Activated CD4-positive, alpha-beta T cell treated with anti-CD3 and anti-CD28 coated beads, Interleukin-2, amount 10 ng/mL, durations not matched to agents 24 days and 14 days (primary cell): ENCODE measurements at regions of chr7 and their contacts with region 1.

Region 1: GRCh38 chr7:151110941-151111645 is 24.8 kb downstream of the AGAP3 start:
- DNase-seq: peak; percentile 93
- H3K4me3 Mint-ChIP-seq: no peak overlapping the region
- H3K27ac Mint-ChIP-seq: no peak overlapping the region
- H3K4me1 Mint-ChIP-seq: peaks cover 3% of the 10 kb centered on the region
- H3K27me3 Mint-ChIP-seq: peaks cover 16% of the 10 kb centered on the region

Region 2: DNA sequence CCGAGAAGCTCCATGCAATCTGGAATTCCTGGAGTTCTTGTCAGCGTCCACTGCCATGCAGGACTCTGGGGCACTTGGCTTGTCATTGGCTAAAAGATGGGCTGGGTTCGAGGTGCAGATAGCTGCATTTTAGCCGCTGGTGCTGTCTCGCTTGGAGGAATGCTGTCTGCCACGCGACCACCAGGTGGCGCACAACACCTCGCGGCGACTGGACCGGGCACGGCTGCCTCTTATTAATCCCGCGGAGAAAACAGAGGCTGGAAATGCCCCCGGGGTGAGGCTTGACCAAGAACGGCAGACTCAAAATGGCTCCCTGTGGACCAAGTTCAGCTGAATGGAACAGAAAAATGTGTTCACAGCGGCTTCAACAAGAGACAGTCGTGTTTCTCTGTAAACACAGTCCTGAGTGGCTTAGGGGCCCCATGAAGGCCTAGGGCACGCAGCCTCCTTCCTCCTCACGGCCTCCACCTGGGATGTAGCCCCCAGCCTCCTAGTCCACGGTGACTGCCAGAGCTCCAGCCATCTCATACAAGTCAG is 212.6 kb before region 1 on chr7:
- intact Hi-C with region 1: loop called (anchors 5 kb)
- DNase-seq: peak; percentile 93
- H3K4me3 Mint-ChIP-seq: no peak overlapping the region
- H3K27ac Mint-ChIP-seq: no peak overlapping the region
- H3K4me1 Mint-ChIP-seq: peaks cover 4% of the 10 kb centered on the region
- H3K27me3 Mint-ChIP-seq: peaks cover 56% of the 10 kb centered on the region

Region 3: DNA sequence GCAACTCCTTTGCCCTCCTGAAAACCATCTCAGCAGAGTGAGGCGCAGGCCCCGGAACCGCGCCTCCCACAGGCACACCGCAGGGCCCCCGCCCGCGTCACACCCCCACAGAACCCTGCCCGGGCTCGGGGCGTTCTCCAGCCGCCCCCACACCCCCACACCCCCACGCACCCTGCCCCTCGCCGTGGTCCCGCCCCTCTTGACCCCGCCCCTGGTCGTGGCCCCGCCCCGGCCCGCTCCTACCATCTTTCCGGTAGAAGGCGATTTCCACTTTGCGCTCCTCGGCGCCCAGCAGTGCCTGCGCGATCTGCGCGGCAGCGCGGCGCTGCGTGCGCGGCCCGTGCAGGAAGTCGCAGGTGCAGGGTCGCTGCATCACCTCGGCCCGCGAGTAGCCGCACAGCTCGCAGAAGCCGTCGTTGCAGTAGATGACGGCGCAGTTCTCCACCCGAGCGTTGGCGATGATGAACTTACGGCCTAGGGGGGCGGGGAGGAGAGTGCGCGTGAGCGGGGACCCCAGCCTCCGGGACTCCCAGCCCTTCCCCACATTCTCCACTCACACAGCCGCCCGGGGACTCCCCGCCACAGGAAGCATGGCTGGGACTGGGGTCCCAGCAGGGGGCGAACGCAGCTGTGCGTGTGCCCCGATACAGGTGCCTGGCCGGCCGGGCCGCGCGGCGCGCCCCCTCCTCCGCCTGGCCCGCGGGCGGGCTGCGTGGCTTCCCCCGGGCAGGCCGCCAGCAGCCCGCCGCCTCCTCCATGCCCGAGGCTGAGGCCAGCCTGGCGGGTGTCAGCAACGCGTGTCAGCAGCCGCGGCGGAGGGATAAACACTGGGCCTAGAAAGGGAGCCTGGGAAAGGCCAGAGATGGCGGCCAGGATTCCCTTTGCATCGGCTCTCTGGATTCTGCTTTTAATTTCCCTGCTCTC is 136.4 kb before region 1 on chr7:
- intact Hi-C with region 1: loop called (anchors 10 kb)
- DNase-seq: peak; percentile 93
- H3K4me3 Mint-ChIP-seq: peak overlapping the region; percentile 85
- H3K27ac Mint-ChIP-seq: peak overlapping the region; percentile 63
- H3K4me1 Mint-ChIP-seq: peaks cover 24% of the 10 kb centered on the region
- H3K27me3 Mint-ChIP-seq: peaks cover 29% of the 10 kb centered on the region

Region 4: GRCh38 chr7:151087245-151088018 is 23.7 kb before region 1 on chr7:
- intact Hi-C with region 1: loop called (anchors 1 kb)
- DNase-seq: peak; percentile 82
- H3K4me3 Mint-ChIP-seq: peak overlapping the region; percentile 87
- H3K27ac Mint-ChIP-seq: peak overlapping the region; percentile 63
- H3K4me1 Mint-ChIP-seq: peaks cover 29% of the 10 kb centered on the region
- H3K27me3 Mint-ChIP-seq: peaks cover 18% of the 10 kb centered on the region

Region 5: GRCh38 chr7:151484971-151485707 is 374.0 kb after region 1 on chr7:
- intact Hi-C with region 1: no loop called
- DNase-seq: no peak
- H3K4me3 Mint-ChIP-seq: no peak overlapping the region
- H3K27ac Mint-ChIP-seq: no peak overlapping the region
- H3K4me1 Mint-ChIP-seq: peaks cover 30% of the 10 kb centered on the region
- H3K27me3 Mint-ChIP-seq: no peaks in the 10 kb centered on the region